ENCODE measurements at regions of chr13 and their contacts with region 1.

Region 1: GRCh38 chr13:114281351-114282040 is at the start of gene UPF3A:
- DNase-seq: peak; percentile 79 to 98 (median 86)

Region 2: GRCh38 chr13:113296842-113297369 is 984.6 kb before region 1 on chr13 and contains the start of gene LAMP1:
- intact Hi-C with region 1: no loop called
- DNase-seq: peak; percentile 90 to 99 (median 93)

Region 3: GRCh38 chr13:114234645-114235421 is 46.7 kb before region 1 on chr13 and contains the start of gene CDC16:
- intact Hi-C with region 1: loop called (anchors 1 kb)
- DNase-seq: peak; percentile 89 to 99 (median 94)

Region 4: DNA sequence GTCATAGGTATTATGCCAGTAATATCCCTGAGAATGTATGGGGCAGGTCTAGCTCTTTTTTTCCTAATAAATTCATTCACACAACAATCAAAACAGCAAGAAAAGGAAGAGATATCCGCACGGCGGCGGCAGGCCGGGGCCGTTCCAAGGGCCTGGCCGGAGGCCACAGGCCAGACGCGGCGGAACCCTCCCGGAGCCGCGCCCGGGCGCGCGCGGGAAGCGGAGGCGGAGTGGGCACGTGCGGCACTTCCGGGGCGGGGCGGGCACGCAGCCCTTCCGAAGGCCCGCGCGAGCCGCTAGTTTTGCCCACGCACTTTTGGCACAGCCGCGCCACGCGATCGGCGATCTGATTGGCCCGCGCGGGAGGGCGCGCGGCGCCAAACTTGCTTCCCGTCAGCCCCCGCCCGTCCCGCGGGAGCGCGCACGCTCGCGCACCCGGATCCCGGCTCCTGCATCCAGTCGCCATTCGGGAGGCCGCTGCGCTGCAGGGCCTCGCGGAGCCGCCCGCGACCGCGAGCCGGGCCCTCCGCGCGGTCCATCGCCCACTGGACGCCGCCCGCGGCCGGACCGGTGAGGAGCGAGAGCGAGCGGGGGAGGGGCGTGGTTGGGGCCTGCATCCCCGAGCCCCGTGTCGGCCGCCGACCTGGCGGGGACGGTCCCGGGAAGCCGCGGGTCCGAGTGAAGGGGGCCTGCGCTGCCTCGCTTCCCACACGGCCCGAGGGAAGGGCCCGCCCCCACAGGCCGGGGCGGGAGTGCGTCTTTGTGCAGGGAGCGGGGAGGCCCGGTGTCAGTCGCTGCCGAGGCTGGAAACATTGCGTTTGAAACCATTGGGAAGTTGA is 32.8 kb after region 1 on chr13 and contains the start of gene CHAMP1:
- intact Hi-C with region 1: loop called (anchors 1 kb)
- DNase-seq: peak; percentile 90 to 99 (median 94)